Breast epithelium (tissue), 4 donors: ENCODE measurements at regions of chr16 and their contacts with region 1.

Region 1: GRCh38 chr16:25224731-25225319 is 8.1 kb downstream of the AQP8 start:
- DNase-seq: no peak
- H3K4me3 ChIP-seq: no peak overlapping the region
- H3K27ac ChIP-seq: no peak overlapping the region
- H3K4me1 ChIP-seq: no peaks in the 10 kb centered on the region
- H3K27me3 ChIP-seq: no peaks in the 10 kb centered on the region
- CTCF ChIP-seq: no peak
- POLR2A ChIP-seq: no peak

Region 2: GRCh38 chr16:25066747-25067631 is 157.8 kb before region 1 on chr16:
- intact Hi-C with region 1: loop called (anchors 10 kb)
- DNase-seq: peak; percentile 62 to 86
- H3K4me3 ChIP-seq: peak overlapping the region; percentile 76 to 99 (median 88)
- H3K27ac ChIP-seq: peak overlapping the region; percentile 93 to 99
- H3K4me1 ChIP-seq: no peaks in the 10 kb centered on the region
- H3K27me3 ChIP-seq: no peaks in the 10 kb centered on the region
- CTCF ChIP-seq: no peak
- POLR2A ChIP-seq: peak; percentile 28

Region 3: DNA sequence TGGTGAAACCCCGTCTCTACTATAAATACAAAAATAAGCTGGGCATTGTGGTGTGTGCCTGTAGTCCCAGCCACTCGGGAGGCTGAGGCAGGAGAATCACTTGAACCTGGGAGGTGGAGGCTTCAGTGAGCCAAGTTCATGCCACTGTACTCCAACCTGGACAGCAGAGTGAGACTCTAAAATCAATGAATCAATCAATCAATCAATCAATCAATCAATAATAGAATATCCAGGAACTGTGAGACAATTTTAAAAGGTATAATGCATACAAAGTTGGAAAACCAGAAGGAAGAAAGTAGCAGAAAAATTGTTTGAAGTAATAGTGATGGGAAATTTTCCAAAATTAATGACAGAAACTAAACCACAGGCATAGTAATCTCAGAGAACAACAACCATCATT is 1100.6 kb after region 1 on chr16:
- intact Hi-C with region 1: no loop called
- DNase-seq: no peak
- H3K4me3 ChIP-seq: no peak overlapping the region
- H3K27ac ChIP-seq: no peak overlapping the region
- H3K4me1 ChIP-seq: no peaks in the 10 kb centered on the region
- H3K27me3 ChIP-seq: no peaks in the 10 kb centered on the region
- CTCF ChIP-seq: no peak
- POLR2A ChIP-seq: no peak